Endothelial cell of umbilical vein (primary cell): ENCODE measurements at regions of chr13 and their contacts with region 1.

Region 1: DNA sequence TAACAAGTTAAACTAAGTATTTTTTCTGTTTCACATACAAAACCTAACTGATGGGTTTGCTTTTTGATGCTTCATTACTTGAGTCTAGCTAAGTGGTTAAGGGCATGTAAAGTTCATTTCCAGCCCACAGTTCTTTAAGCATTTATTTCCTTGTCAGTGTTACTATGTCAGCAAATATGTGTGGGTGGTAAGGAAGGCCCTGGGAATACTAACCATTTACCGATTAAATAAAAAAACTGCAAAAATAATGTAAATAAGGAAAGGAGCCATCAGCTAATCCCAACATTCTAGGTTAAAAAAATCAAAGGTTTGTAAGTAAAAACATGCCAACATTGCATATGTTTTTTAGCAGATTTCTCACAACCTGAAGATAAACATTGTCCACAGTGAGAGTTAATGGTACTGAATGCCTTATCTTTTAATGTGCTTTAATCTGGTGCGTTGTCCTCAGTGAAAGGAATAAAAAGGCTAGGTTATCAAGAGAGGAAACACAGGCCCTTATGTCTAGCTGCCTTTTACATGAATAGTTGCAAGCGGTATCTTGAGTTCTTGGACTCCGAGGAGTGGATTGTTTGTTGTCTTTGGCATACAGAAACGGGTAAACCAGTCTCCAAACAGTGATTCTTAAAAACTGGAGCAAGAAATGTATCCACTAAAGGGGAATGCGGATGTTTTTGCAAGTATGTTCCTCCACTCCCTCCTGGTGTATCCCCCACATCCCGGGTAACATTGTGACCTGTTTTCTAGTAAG is 949.6 kb upstream of the SLC10A2 start:
- DNase-seq: peak; percentile 89
- H3K4me3 ChIP-seq: no peak overlapping the region
- H3K27ac ChIP-seq: peak overlapping the region; percentile 74
- H3K4me1 ChIP-seq: peaks cover 23% of the 10 kb centered on the region
- H3K27me3 ChIP-seq: no peaks in the 10 kb centered on the region
- CTCF ChIP-seq: no peak
- POLR2A ChIP-seq: no peak

Region 2: DNA sequence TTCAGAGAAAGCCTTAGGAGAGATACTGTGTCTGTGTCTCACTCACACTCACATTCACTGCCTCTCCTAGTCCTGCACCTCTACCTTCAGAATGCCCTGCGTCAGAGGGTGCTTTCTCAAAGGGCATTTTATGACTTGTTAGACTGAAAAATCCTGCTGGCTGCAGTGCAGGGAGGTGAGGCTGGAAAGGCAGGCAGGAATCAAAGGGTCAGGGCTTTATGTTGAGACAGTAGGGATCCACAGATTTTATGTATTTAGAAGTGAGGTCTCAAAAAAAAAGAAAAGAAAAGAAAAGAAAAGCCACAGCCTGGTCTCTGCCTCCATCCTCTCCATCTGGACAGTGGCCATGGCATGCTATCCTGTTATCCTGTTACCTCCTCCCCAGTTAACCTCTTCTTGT is 13.6 kb before region 1 on chr13:
- CTCF ChIA-PET with region 1: no interaction called
- POLR2A ChIA-PET with region 1: no interaction called
- dilution Hi-C with region 1: no loop called
- intact Hi-C with region 1: no loop called
- DNase-seq: no peak
- H3K4me3 ChIP-seq: no peak overlapping the region
- H3K27ac ChIP-seq: no peak overlapping the region
- H3K4me1 ChIP-seq: no peaks in the 10 kb centered on the region
- H3K27me3 ChIP-seq: no peaks in the 10 kb centered on the region
- CTCF ChIP-seq: no peak
- POLR2A ChIP-seq: no peak

Region 3: GRCh38 chr13:104408733-104409132 is 392.9 kb after region 1 on chr13:
- CTCF ChIA-PET with region 1: no interaction called
- POLR2A ChIA-PET with region 1: no interaction called
- dilution Hi-C with region 1: no loop called
- intact Hi-C with region 1: loop called (anchors 5 kb)
- DNase-seq: peak; percentile 54
- H3K4me3 ChIP-seq: no peak overlapping the region
- H3K27ac ChIP-seq: peak overlapping the region; percentile 55
- H3K4me1 ChIP-seq: peaks cover 13% of the 10 kb centered on the region
- H3K27me3 ChIP-seq: no peaks in the 10 kb centered on the region
- CTCF ChIP-seq: no peak
- POLR2A ChIP-seq: no peak